Prostate gland (tissue), 2 donors: ENCODE measurements at regions of chr13 and their contacts with region 1.

Region 1: GRCh38 chr13:44197791-44198770 is 175.5 kb upstream of the SERP2 start:
- DNase-seq: no peak
- H3K4me3 ChIP-seq: no peak overlapping the region
- H3K27ac ChIP-seq: no peak overlapping the region
- H3K4me1 ChIP-seq: no peaks in the 10 kb centered on the region
- H3K27me3 ChIP-seq: no peaks in the 10 kb centered on the region
- CTCF ChIP-seq: no peak
- POLR2A ChIP-seq: no peak

Region 2: GRCh38 chr13:44160591-44161191 is 37.4 kb before region 1 on chr13:
- intact Hi-C with region 1: loop called (anchors 2 kb)
- DNase-seq: no peak
- H3K4me3 ChIP-seq: no peak overlapping the region
- H3K27ac ChIP-seq: no peak overlapping the region
- H3K4me1 ChIP-seq: peaks cover 6% of the 10 kb centered on the region
- H3K27me3 ChIP-seq: no peaks in the 10 kb centered on the region
- CTCF ChIP-seq: no peak
- POLR2A ChIP-seq: no peak

Region 3: GRCh38 chr13:44259045-44260027 is 61.3 kb after region 1 on chr13:
- intact Hi-C with region 1: no loop called
- DNase-seq: no peak
- H3K4me3 ChIP-seq: no peak overlapping the region
- H3K27ac ChIP-seq: no peak overlapping the region
- H3K4me1 ChIP-seq: no peaks in the 10 kb centered on the region
- H3K27me3 ChIP-seq: no peaks in the 10 kb centered on the region
- CTCF ChIP-seq: no peak
- POLR2A ChIP-seq: no peak